Activated naive CD4-positive, alpha-beta T cell treated with anti-CD3 and anti-CD28 coated beads for 36 hours (primary cell): ENCODE measurements at regions of chr17 and their contacts with region 1.

Region 1: GRCh38 chr17:18033442-18034099 is 5.4 kb downstream of the ATPAF2 start:
- DNase-seq: peak; percentile 74
- H3K4me3 Mint-ChIP-seq: no peak overlapping the region
- H3K27ac Mint-ChIP-seq: no peak overlapping the region
- H3K4me1 Mint-ChIP-seq: peaks cover 33% of the 10 kb centered on the region
- H3K27me3 Mint-ChIP-seq: no peaks in the 10 kb centered on the region

Region 2: DNA sequence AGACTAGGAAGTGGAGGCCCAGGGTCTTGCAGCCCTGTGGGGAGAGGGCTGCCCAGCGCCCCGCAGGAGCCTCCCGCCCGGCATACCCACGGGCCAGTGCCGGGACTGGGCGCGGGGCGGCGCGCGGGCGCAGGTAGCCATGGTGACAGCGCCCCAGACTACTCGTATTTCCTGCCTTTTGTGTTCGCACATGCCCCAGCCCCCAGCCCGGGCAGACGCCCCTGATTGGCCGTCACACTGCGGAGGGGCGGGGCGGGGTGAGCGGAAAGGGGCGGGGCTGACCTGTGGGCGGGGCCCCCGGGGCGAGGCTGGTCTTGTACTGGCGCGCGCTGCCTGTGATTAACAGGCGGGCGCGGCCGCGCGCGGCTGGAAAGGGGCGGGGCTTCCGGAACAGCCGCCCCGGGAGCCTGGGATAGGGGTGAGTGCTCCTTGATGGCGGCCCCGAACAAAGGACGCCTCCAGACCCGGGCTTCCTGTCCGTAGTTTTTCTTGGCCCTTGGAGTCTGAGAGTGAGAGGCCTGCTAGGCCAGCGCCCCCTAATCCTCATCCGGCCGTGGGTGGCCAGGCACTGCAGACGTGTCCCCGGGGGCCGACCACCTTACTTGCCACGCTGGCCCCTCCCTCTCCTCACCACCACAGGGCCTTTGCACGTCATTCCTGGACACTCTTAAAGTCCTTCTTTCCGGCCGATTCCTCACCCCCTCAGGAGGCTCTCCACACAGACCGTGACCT is 281.3 kb before region 1 on chr17:
- CTCF ChIA-PET with region 1: no interaction called
- intact Hi-C with region 1: no loop called
- DNase-seq: peak; percentile 97
- H3K4me3 Mint-ChIP-seq: peak overlapping the region; percentile 92
- H3K27ac Mint-ChIP-seq: peak overlapping the region; percentile 98
- H3K4me1 Mint-ChIP-seq: peaks cover 71% of the 10 kb centered on the region
- H3K27me3 Mint-ChIP-seq: no peaks in the 10 kb centered on the region

Region 3: GRCh38 chr17:17812211-17813057 is 221.1 kb before region 1 on chr17:
- CTCF ChIA-PET with region 1: interaction called, 3 read pairs
- intact Hi-C with region 1: loop called (anchors 2 kb)
- DNase-seq: peak; percentile 72
- H3K4me3 Mint-ChIP-seq: no peak overlapping the region
- H3K27ac Mint-ChIP-seq: peak overlapping the region; percentile 18
- H3K4me1 Mint-ChIP-seq: peaks cover 10% of the 10 kb centered on the region
- H3K27me3 Mint-ChIP-seq: no peaks in the 10 kb centered on the region

Region 4: DNA sequence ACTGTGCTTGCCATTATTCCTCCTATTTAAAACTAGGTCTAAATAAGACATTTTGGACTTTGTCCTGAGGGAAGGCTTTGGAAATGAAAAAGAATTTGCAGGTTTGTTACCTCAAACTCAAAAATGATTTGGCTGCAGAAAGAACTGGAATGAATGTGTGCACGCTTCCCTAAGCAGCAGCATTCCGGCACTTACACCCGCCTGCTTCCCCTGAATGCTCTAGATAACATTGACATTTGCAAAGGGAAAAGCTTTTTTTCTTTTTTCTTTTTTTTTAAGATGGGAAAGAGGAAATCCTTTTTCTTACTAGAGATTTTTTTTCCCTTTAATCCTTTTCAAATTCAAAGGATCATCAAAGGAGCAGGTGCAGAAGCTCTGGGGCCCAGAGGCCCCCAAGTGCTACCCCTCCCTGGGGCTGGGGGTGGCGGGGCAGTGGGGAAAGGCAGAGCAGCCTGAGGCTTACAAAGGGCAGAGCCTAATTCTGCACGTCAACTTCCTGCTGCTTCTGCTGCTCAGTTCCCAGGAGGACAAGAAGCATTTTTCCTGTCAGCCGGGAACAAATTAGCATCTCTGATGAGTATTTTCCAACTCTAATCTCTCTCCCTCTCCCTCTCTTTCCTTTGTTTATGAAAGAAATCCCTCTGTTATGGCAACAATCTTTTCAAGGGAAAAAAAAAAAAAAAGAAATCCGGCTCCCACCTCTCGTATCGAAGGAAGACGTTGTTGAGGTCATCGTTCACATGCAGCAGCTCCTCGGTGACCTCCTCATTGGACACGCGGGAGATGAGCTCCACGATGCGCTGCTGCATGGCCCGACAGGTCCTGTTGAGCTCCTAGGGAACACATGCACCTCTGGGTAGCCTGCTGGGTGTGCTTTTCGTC is 164.7 kb before region 1 on chr17:
- CTCF ChIA-PET with region 1: no interaction called
- intact Hi-C with region 1: loop called (anchors 5 kb)
- DNase-seq: no peak
- H3K4me3 Mint-ChIP-seq: no peak overlapping the region
- H3K27ac Mint-ChIP-seq: no peak overlapping the region
- H3K4me1 Mint-ChIP-seq: no peaks in the 10 kb centered on the region
- H3K27me3 Mint-ChIP-seq: no peaks in the 10 kb centered on the region

Region 5: DNA sequence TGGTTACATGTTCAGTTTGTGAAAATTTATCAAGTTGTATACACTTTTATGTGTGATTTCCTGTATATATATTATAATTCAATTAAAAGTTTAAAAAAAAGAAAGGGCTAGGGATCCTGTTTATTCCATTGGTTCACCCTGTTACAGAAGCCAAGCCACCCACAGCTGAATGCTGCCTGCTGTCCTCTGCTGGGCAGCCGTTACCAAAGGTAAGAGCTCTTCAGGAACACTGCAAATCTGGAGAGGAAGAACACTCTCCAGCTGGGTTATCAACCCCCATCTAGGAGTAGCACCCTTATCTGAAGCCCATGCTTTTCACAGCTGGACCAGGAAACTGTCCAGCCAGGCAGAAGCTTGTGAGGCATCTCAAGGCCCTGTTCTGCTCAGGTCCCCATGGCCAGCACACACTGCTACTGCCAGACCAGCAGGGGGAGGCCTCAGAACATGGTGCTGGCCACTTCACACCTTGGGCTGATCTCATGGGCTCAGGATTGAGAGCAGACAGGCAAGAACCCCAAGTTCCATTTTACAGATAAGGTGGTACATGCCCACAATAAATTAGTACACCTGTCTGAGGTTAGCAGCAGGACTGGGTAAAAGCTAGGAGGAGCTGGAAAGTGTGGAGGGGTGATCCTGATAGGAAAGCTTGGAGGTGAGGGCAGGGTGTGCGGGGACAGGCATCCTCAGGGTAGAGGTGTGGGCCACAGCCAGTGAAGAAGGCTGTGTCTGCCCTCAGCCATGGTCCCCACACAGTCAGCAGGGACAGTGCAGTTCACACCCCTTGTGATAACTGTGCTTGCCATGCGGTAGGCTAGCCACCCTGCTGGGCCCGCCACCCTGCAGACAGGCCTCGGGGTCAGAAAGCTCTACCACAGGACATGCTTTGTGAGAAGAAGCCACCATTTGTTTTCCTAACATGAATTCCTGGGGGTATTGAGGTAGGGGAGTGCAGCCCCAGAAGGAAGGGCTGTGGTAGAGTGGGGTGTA is 142.5 kb before region 1 on chr17:
- CTCF ChIA-PET with region 1: interaction called, 21 read pairs
- intact Hi-C with region 1: loop called (anchors 1 kb)
- DNase-seq: peak; percentile 75
- H3K4me3 Mint-ChIP-seq: no peak overlapping the region
- H3K27ac Mint-ChIP-seq: no peak overlapping the region
- H3K4me1 Mint-ChIP-seq: peaks cover 2% of the 10 kb centered on the region
- H3K27me3 Mint-ChIP-seq: no peaks in the 10 kb centered on the region

Region 6: GRCh38 chr17:17972126-17972951 is 61.2 kb before region 1 on chr17 and contains the starts of genes DRC3 and TOM1L2:
- CTCF ChIA-PET with region 1: no interaction called
- intact Hi-C with region 1: no loop called
- DNase-seq: peak; percentile 100
- H3K4me3 Mint-ChIP-seq: peak within 1 kb of the TSS; percentile 90
- H3K27ac Mint-ChIP-seq: peak within 1 kb of the TSS; percentile 75
- H3K4me1 Mint-ChIP-seq: peaks cover 35% of the 10 kb centered on the region
- H3K27me3 Mint-ChIP-seq: no peaks in the 10 kb centered on the region
- total RNA-seq, gene DRC3: 0.40 to 0.64 TPM
- total RNA-seq, gene TOM1L2: 9.8 to 9.9 TPM

Region 7: DNA sequence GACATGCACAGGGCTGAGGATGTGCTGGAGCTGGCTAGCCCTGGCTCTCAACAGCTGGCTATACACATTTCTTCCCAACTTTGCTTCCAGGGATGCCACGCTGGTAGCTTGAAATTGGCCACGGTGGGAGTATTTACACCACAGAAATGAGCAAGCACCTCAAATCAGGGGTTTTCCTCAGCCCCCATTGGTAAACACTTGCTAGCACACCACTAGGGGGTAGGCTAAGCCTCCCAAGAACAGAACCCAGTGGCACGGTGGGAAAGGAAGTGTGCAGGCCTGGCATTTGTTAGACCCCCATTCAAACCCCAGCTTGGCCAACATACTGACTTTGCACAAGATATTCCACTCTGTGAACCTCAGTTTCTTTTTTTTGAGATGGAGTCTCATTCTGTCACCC is 48.0 kb before region 1 on chr17:
- CTCF ChIA-PET with region 1: interaction called, 8 read pairs
- intact Hi-C with region 1: loop called (anchors 2 kb)
- DNase-seq: no peak
- H3K4me3 Mint-ChIP-seq: no peak overlapping the region
- H3K27ac Mint-ChIP-seq: no peak overlapping the region
- H3K4me1 Mint-ChIP-seq: no peaks in the 10 kb centered on the region
- H3K27me3 Mint-ChIP-seq: no peaks in the 10 kb centered on the region